ENCODE measurements at regions of chr19 and their contacts with region 1.

Region 1: GRCh38 chr19:36489118-36489919 is at the start of gene ZNF566:
- DNase-seq: peak; percentile 97
- H3K4me3 ChIP-seq: peak within 1 kb of the TSS; percentile 62 to 80 (median 72)
- H3K27ac ChIP-seq: peak within 1 kb of the TSS; percentile 90 to 97 (median 92)
- H3K4me1 ChIP-seq: peaks cover 9 to 25% (median 21%) of the 10 kb centered on the region in 4 donors
- H3K27me3 ChIP-seq: no peaks in the 10 kb centered on the region
- CTCF ChIP-seq: peak in 1 of 3 experiments; percentile 8
- EP300 ChIP-seq: no peak
- POLR2A ChIP-seq: no peak
- total RNA-seq, gene ZNF566: 7.3 to 14.6 (median 9.9) TPM

Region 2: DNA sequence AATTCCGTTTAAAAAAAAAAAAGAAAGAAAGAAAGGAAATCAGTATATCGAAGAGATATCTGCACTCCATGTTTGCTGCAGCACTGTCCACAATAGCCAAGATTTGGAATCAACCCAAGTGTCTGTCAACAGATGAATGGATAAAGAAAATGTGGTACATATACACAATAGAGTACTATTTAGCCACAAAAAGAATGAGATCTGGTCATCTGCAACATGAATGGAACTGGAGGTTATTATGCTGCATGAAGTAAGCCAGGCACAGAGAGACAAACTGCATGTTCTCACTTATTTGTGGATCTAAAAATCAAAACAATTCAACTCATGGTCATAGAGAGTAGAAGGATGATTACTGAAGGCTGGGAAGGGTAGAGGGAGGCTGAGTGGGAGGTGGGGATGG is 291.2 kb before region 1 on chr19:
- intact Hi-C with region 1: loop called (anchors 10 kb)
- DNase-seq: no peak
- H3K4me3 ChIP-seq: no peak overlapping the region
- H3K27ac ChIP-seq: no peak overlapping the region
- H3K4me1 ChIP-seq: no peaks in the 10 kb centered on the region
- H3K27me3 ChIP-seq: no peaks in the 10 kb centered on the region
- CTCF ChIP-seq: no peak
- EP300 ChIP-seq: no peak
- POLR2A ChIP-seq: no peak

Region 3: GRCh38 chr19:36420961-36421748 is 68.2 kb before region 1 on chr19:
- intact Hi-C with region 1: loop called (anchors 5 kb)
- DNase-seq: no peak
- H3K4me3 ChIP-seq: peak overlapping the region; percentile 54 to 59 (median 58)
- H3K27ac ChIP-seq: peak overlapping the region; percentile 58 to 68 (median 64)
- H3K4me1 ChIP-seq: peaks cover 13 to 37% (median 25%) of the 10 kb centered on the region in 4 donors
- H3K27me3 ChIP-seq: peaks cover 0 to 8% (median 0%) of the 10 kb centered on the region in 4 donors
- CTCF ChIP-seq: no peak
- EP300 ChIP-seq: no peak
- POLR2A ChIP-seq: no peak

Region 4: GRCh38 chr19:36528194-36528920 is 39.0 kb after region 1 on chr19 and contains the start of gene ZNF260:
- intact Hi-C with region 1: loop called (anchors 5 kb)
- DNase-seq: peak; percentile 98
- H3K4me3 ChIP-seq: peak within 1 kb of the TSS; percentile 67 to 77 (median 71)
- H3K27ac ChIP-seq: peak within 1 kb of the TSS; percentile 81 to 93 (median 90)
- H3K4me1 ChIP-seq: peaks cover 18 to 30% (median 27%) of the 10 kb centered on the region in 4 donors
- H3K27me3 ChIP-seq: no peaks in the 10 kb centered on the region
- CTCF ChIP-seq: peak in 1 of 3 experiments; percentile 8
- EP300 ChIP-seq: no peak
- POLR2A ChIP-seq: peak; percentile 3
- total RNA-seq, gene ZNF260: 7.7 to 12.4 (median 10.7) TPM